Activated T-helper 1 cell treated with anti-CD3 and anti-CD28 coated beads, Interleukin-12 subunit alpha, Interleukin-12 subunit beta, Interleukin-2, Interleukin-4 antibody, amounts not matched to agents 30 ng/mL and 10 ng/mL and 1 ng/mL, durations not matched to agents 14 hours and 24 hours and 36 hours (primary cell): ENCODE measurements at regions of chr2 and their contacts with region 1.

Region 1: GRCh38 chr2:129849559-129850160 is 129.8 kb upstream of the RAB6C start:
- DNase-seq: no peak
- H3K4me3 Mint-ChIP-seq: no peak overlapping the region
- H3K27ac Mint-ChIP-seq: no peak overlapping the region
- H3K4me1 Mint-ChIP-seq: no peaks in the 10 kb centered on the region
- H3K27me3 Mint-ChIP-seq: peaks cover 10% of the 10 kb centered on the region

Region 2: DNA sequence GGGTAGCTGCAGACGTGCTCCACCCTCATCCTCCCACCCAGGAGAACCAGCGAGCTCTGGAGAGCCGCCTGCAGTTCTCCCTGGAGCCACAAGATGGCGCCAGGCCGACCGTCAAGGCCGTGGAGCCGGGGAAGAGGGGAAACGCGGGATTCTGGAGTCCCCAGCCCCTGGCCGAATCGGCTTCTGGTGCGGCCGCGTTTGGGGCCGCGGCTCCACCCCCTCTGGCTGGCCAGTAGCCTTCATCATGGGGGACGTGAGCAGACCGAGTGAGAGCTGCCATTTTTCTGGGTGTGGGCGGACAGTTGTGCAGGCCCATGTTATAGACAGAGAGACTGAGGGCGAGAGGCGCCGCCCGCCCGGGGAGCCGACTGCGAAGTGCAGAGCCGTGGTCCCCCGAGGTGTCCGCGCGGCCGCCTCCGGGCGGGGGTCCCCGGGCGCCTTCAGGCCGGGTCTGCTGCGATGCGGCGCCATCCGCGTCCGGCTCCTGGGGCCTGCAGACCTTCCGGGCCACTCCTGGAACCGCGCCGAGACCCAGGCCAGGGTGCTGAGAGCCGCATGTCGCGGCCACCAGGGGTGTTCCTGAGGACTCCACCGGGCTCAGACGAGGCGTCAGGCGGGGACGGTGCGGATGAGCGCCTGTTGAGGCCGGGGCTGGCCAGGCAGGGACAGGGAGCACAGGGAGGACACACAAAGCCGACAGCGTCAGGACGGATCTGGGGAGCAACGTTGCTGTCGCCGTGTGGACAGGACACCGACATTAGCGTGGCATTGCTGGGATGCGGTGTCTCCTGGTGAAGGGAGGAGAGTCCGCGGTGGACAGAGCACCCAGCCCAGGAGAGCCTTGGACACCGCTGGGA is 1112.7 kb before region 1 on chr2:
- intact Hi-C with region 1: loop called (anchors 5 kb)
- DNase-seq: peak; percentile 45
- H3K4me3 Mint-ChIP-seq: peak overlapping the region; percentile 60
- H3K27ac Mint-ChIP-seq: no peak overlapping the region
- H3K4me1 Mint-ChIP-seq: peaks cover 11% of the 10 kb centered on the region
- H3K27me3 Mint-ChIP-seq: peaks cover 20% of the 10 kb centered on the region